ENCODE measurements at regions of chr10 and their contacts with region 1.

Region 1: GRCh38 chr10:33523236-33523792 is 188.8 kb upstream of the NRP1 start:
- DNase-seq: no peak
- H3K4me3 ChIP-seq: no peak overlapping the region
- H3K27ac ChIP-seq: no peak overlapping the region
- H3K4me1 ChIP-seq: no peaks in the 10 kb centered on the region
- CTCF ChIP-seq: no peak

Region 2: DNA sequence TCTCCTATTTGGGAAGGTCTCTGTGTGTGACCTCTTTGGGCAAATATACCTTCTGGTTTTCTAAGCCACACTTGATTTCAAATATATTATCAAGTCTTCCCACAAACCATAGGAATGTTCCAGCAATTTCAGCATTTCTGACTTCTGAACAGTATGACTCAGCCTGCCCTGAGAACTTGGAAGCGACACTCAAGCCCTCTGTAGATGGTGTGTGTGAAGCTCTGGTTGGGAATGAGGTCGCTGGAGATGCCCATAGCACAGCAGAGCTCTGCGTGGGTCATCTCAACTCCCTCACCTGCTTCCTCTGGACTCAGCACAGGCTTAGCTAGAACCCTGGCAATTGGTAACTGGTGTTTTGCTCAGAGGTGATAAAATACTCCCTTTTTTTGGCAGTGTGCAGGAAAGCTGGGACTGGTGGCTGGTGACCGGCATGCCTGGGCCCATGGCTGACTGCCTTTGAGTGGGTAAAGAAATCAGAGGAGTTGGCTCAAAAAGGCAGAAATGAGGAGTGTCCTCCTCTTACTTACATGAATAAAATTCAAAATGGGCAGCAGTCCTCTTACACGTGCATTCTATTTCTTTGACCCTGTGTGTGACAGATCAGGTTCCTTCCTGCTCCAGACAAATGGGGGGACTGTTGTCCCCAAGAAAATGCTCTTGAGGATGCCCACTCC is 101.4 kb before region 1 on chr10:
- CTCF ChIA-PET with region 1: no interaction called
- POLR2A ChIA-PET with region 1: no interaction called
- intact Hi-C with region 1: no loop called
- DNase-seq: no peak
- H3K4me3 ChIP-seq: no peak overlapping the region
- H3K27ac ChIP-seq: no peak overlapping the region
- H3K4me1 ChIP-seq: no peaks in the 10 kb centered on the region
- CTCF ChIP-seq: no peak

Region 3: GRCh38 chr10:33441561-33441960 is 81.8 kb before region 1 on chr10:
- CTCF ChIA-PET with region 1: interaction called, 13 read pairs
- POLR2A ChIA-PET with region 1: no interaction called
- intact Hi-C with region 1: no loop called
- DNase-seq: no peak
- H3K4me3 ChIP-seq: no peak overlapping the region
- H3K27ac ChIP-seq: no peak overlapping the region
- H3K4me1 ChIP-seq: no peaks in the 10 kb centered on the region
- CTCF ChIP-seq: no peak